H1 (cell line): ENCODE measurements at regions of chr11 and their contacts with region 1.

Region 1: DNA sequence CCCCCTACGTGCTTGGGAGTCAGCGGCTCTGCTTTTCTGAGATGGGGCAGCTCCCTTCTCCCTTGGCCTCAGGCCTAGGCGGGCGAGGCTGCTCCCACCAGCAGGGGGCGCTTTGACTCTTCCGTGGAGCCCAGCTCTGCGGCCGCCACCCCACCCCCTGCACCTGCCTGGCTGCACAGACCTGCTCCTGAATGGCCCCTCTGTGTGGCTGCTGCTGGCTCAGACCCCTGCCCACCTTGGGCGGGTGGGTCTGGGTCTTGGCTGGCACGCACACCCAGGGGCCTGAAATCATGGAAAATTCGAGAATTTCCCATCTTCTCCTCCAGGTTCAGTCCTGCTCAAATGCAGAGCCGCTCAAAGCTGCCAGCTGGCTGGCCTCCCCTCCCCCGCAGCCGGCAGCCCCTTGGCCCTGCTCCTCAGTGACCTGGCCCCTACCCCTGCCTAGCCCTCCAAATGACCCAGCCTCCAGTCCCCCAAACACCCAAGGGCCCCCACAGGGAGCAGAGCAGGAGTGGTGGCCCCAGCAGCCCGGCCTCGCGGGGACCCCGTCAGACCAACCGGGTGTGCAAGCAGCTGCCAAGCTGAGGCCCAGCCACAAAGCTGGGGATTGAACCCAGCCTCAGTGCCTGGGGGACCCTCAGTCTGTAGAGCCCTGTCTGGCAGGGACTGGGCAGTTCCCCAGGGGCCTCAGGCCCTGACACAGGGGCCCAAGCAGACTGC is 9.0 kb downstream of the PRR33 start:
- DNase-seq: peak; percentile 54 to 94
- H3K4me3 ChIP-seq: no peak overlapping the region
- H3K27ac ChIP-seq: no peak overlapping the region
- H3K4me1 ChIP-seq: peaks cover 0 to 5% (median 2%) of the 10 kb centered on the region in 4 experiments; a peak in 3 of 7 replicates
- H3K27me3 ChIP-seq: no peaks in the 10 kb centered on the region; a peak in 1 of 7 replicates
- CTCF ChIP-seq: peak; percentile 91 to 94 (median 92)
- EP300 ChIP-seq: no peak
- POLR2A ChIP-seq: no peak
- RAD21 ChIP-seq: peak; percentile 89 to 94

Region 2: GRCh38 chr11:1870721-1871466 is 11.8 kb before region 1 on chr11:
- CTCF ChIA-PET with region 1: interaction called, 14 read pairs
- POLR2A ChIA-PET with region 1: no interaction called
- DNase-seq: no peak
- H3K4me3 ChIP-seq: no peak overlapping the region
- H3K27ac ChIP-seq: no peak overlapping the region
- H3K4me1 ChIP-seq: no peaks in the 10 kb centered on the region
- H3K27me3 ChIP-seq: peaks cover 0 to 3% (median 0%) of the 10 kb centered on the region in 4 experiments; a peak in 1 of 7 replicates
- CTCF ChIP-seq: no peak
- EP300 ChIP-seq: no peak
- POLR2A ChIP-seq: no peak
- RAD21 ChIP-seq: no peak

Region 3: DNA sequence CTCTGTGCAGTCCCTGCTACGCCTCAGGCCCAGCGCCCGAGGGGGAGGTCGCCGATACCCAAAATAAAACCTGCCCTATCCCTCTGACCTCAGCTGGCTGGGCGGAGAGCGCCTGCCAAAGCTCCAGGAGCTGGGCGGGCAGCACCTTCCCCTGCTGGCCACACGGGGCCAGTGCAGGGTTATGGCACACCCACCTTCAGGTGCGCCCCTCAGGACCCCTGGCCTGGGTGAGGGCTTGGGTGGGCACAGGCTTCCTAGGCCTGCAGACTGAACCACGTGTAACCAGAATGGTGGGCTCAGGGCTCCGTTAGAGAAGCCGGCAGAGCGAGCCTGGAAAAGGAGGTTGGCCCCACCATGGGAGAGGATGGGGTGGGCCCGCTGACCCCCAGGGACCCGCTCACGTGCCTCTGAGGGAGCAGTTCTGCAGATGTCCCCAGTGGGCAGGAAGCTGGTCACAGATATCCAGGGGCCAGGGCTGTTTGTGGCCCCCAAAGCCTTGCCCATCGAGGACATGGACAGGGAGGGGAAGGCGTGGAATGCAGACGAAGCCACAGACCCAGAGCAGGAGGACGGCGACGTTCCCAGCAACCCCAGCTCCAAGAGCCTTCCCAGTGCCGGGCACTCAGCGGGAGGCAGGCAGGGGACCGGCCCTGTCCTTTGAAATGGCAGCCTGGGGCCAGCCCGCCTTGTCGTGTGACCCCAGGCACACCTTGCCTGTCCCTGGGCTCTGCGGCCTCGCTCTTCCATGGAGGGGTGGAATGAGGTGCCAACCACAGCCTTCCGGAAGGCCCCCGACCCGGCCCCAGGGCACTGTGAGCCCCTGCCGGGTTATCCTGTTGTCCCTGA is 35.2 kb after region 1 on chr11:
- CTCF ChIA-PET with region 1: interaction called, 24 read pairs
- POLR2A ChIA-PET with region 1: interaction called, 3 read pairs
- DNase-seq: no peak
- H3K4me3 ChIP-seq: no peak overlapping the region
- H3K27ac ChIP-seq: no peak overlapping the region
- H3K4me1 ChIP-seq: peaks cover 0 to 3% (median 3%) of the 10 kb centered on the region in 4 experiments; a peak in 4 of 7 replicates
- H3K27me3 ChIP-seq: no peaks in the 10 kb centered on the region
- CTCF ChIP-seq: peak; percentile 74 to 80 (median 77)
- EP300 ChIP-seq: no peak
- POLR2A ChIP-seq: no peak
- RAD21 ChIP-seq: peak; percentile 52 to 68

Region 4: DNA sequence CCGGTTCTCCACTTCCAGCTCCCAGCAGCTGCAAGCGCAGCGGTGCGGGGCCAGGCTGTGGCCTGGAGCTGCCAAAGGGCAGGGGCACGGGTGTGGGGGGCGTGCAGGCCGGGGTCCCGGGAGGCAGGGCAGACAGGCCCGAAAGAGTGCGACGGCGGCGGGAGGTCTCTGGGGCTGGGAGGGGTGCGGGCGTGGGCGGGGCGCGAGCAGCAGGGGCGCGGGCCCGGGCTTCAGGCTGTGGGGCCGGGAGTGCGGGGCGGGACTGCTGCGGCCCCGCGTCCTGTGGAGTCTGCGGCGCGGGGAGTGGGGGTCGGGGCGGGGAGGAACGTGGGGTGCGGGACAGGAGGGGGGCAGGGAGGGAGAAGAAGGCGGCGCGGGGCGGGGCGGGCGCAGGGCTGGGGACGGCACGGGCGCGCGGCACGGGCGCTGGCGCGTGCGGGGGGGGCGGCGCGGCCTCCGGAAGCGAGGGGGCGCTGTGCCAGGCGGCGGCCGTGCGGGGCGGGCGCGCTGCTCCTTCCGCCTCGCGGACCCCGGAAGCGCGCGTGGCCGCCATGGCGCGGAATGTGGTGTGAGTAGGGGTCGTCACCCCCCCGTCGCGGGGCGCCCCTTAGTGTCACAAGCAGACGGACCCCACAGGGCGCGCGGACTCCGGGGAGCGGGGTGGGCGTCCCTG is 64.3 kb after region 1 on chr11 and contains the start of gene MRPL23:
- CTCF ChIA-PET with region 1: interaction called, 33 read pairs
- POLR2A ChIA-PET with region 1: no interaction called
- DNase-seq: no peak
- H3K4me3 ChIP-seq: no peak within 1 kb of the TSS
- H3K27ac ChIP-seq: no peak within 1 kb of the TSS
- H3K4me1 ChIP-seq: peaks cover 0 to 7% (median 0%) of the 10 kb centered on the region in 4 experiments; a peak in 2 of 7 replicates
- H3K27me3 ChIP-seq: no peaks in the 10 kb centered on the region
- CTCF ChIP-seq: no peak
- EP300 ChIP-seq: no peak
- POLR2A ChIP-seq: no peak
- RAD21 ChIP-seq: no peak
- total RNA-seq, gene MRPL23: 86.0 and 86.4 TPM in 2 replicates

Region 5: GRCh38 chr11:2027708-2028107 is 145.0 kb after region 1 on chr11:
- CTCF ChIA-PET with region 1: interaction called, 14 read pairs
- POLR2A ChIA-PET with region 1: no interaction called
- DNase-seq: no peak
- H3K4me3 ChIP-seq: no peak overlapping the region
- H3K27ac ChIP-seq: no peak overlapping the region
- H3K4me1 ChIP-seq: no peaks in the 10 kb centered on the region
- H3K27me3 ChIP-seq: no peaks in the 10 kb centered on the region
- CTCF ChIP-seq: no peak
- EP300 ChIP-seq: no peak
- POLR2A ChIP-seq: no peak
- RAD21 ChIP-seq: no peak